Activated CD4-positive, alpha-beta memory T cell treated with anti-CD3 and anti-CD28 coated beads for 36 hours (primary cell): ENCODE measurements at regions of chr2 and their contacts with region 1.

Region 1: GRCh38 chr2:189466660-189467059 is 25.4 kb downstream of the WDR75 start:
- DNase-seq: no peak
- H3K4me3 Mint-ChIP-seq: no peak overlapping the region
- H3K27ac Mint-ChIP-seq: no peak overlapping the region
- H3K4me1 Mint-ChIP-seq: no peaks in the 10 kb centered on the region
- H3K27me3 Mint-ChIP-seq: no peaks in the 10 kb centered on the region

Region 2: DNA sequence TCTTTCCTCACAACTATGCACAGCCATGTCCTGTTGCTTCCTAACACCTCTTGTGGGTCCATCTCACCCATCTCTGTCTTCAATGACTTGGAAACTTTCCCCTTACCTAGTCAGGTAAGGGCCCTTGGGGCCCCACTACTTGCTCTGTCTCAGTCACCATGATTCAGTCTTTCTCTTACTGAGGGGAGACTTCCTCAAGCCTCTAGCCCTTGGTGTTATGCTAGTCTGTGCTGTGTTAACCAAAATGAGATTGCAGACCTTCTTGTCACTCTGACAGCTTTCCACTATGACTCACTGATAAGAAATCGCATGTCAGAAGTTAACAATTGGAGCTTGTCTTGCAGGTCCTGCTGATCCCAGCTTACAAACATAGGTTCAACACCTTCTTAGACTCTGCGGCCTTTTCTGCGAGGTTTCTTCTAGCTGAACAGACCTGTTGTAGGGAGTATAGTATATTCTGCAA is 39.9 kb after region 1 on chr2:
- CTCF ChIA-PET with region 1: no interaction called
- POLR2A ChIA-PET with region 1: no interaction called
- intact Hi-C with region 1: no loop called
- DNase-seq: peak; percentile 39
- H3K4me3 Mint-ChIP-seq: no peak overlapping the region
- H3K27ac Mint-ChIP-seq: peak overlapping the region; percentile 6
- H3K4me1 Mint-ChIP-seq: peaks cover 15% of the 10 kb centered on the region
- H3K27me3 Mint-ChIP-seq: no peaks in the 10 kb centered on the region

Region 3: GRCh38 chr2:189633392-189633811 is 166.7 kb after region 1 on chr2:
- CTCF ChIA-PET with region 1: no interaction called
- POLR2A ChIA-PET with region 1: no interaction called
- intact Hi-C with region 1: loop called (anchors 2 kb)
- DNase-seq: peak; percentile 18
- H3K4me3 Mint-ChIP-seq: no peak overlapping the region
- H3K27ac Mint-ChIP-seq: no peak overlapping the region
- H3K4me1 Mint-ChIP-seq: no peaks in the 10 kb centered on the region
- H3K27me3 Mint-ChIP-seq: no peaks in the 10 kb centered on the region